Lower leg skin (tissue), 4 donors: ENCODE measurements at regions of chr15 and their contacts with region 1.

Region 1: GRCh38 chr15:27714675-27715074 is 384.4 kb downstream of the OCA2 start:
- DNase-seq: no peak
- H3K4me3 ChIP-seq: no peak overlapping the region
- CTCF ChIP-seq: no peak
- POLR2A ChIP-seq: no peak

Region 2: GRCh38 chr15:29289173-29289572 is 1574.5 kb after region 1 on chr15:
- intact Hi-C with region 1: loop called (anchors 5 kb)
- DNase-seq: no peak
- H3K4me3 ChIP-seq: no peak overlapping the region
- CTCF ChIP-seq: no peak
- POLR2A ChIP-seq: no peak